Natural killer cell (primary cell): ENCODE measurements at regions of chr22 and their contacts with region 1.

Region 1: DNA sequence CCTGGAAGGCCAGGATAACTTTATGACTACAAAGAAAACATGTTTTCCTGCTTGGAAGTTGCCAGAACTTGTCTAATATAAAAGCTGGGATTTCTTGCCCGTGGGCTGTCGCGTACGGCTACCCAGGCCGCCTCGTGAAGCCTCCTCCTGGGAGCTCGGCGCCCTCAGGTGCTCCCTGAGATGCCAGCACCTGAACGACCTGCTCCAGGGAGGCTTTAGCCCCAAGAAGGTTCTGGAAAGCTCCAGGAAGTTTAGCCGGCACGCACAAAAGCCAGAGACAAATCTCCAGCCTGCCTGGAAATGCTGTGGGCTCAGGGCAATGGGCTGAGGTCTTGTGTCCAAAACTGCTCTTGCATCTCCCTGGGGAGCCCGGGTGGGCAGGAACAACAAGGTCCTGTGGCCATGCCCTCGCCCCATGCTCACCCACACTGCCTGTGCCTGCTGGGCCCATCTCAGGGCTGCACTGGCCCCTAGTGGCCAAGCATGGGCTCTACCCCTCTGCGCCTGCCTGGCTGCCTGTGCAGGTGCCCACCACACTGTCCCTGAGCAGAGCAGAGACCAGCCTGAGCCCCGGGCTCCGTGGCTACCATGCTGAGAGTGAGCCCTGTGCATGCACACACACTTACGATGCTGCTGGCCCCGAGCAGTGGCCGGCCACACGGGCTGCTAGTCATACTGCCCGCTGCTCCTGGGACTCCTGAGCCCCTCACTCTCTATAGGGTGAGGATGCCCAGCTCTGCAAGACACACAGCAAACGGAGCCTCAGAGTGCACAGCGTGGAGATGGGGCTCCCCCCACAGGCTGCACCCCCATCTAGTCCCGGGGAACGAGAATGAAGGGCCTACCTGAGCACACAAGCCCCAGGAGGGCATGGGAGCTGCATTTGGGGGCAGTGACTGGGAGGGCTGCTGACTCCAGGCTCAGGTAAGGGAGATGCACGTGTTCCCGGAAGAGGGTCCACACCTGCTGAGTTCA is 4.9 kb upstream of the CELSR1 start:
- DNase-seq: peak; percentile 74 to 85
- ATAC-seq: peak; percentile 94 to 100 (median 100)
- H3K4me3 ChIP-seq: no peak overlapping the region
- H3K4me3 Mint-ChIP-seq: no peak overlapping the region
- H3K27ac ChIP-seq: no peak overlapping the region
- H3K27ac Mint-ChIP-seq: no peak overlapping the region
- H3K4me1 ChIP-seq: peaks cover 22% of the 10 kb centered on the region
- H3K4me1 Mint-ChIP-seq: peaks cover 0 to 7% of the 10 kb centered on the region in 2 donors
- H3K27me3 ChIP-seq: peaks cover 18% of the 10 kb centered on the region
- H3K27me3 Mint-ChIP-seq: peaks cover 24 to 32% of the 10 kb centered on the region in 2 donors
- CTCF ChIP-seq: peak; percentile 92

Region 2: DNA sequence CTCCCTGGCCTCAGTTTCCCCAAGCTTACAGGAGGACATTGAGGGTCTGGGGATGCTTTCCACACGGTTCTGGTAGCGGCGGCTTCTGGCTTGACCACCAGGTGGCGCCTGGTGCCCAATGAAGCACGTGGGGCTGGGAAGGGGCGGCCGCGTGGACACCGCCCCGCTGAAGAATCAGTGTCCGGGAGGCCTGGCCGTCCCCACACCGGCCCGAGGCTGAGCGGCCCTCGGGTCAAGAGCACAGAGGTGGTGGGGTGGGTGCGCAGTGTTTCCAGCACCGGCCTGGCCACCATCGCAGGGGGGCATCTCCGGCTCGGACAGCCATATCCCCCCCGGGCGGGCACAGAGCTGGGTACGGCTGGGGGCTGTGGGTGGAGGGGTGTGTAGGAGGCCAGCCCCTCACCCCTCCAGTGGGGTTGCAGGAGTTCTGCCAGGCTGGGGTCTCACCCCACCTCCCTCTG is 419.8 kb before region 1 on chr22:
- intact Hi-C with region 1: loop called (anchors 5 kb)
- DNase-seq: peak; percentile 71 to 82
- ATAC-seq: peak in 2 of 3 donors; percentile 84 to 89
- H3K4me3 ChIP-seq: no peak overlapping the region
- H3K4me3 Mint-ChIP-seq: no peak overlapping the region
- H3K27ac ChIP-seq: no peak overlapping the region
- H3K27ac Mint-ChIP-seq: no peak overlapping the region
- H3K4me1 ChIP-seq: peaks cover 12% of the 10 kb centered on the region
- H3K4me1 Mint-ChIP-seq: no peaks in the 10 kb centered on the region
- H3K27me3 ChIP-seq: no peaks in the 10 kb centered on the region
- H3K27me3 Mint-ChIP-seq: no peaks in the 10 kb centered on the region
- CTCF ChIP-seq: peak; percentile 97

Region 3: DNA sequence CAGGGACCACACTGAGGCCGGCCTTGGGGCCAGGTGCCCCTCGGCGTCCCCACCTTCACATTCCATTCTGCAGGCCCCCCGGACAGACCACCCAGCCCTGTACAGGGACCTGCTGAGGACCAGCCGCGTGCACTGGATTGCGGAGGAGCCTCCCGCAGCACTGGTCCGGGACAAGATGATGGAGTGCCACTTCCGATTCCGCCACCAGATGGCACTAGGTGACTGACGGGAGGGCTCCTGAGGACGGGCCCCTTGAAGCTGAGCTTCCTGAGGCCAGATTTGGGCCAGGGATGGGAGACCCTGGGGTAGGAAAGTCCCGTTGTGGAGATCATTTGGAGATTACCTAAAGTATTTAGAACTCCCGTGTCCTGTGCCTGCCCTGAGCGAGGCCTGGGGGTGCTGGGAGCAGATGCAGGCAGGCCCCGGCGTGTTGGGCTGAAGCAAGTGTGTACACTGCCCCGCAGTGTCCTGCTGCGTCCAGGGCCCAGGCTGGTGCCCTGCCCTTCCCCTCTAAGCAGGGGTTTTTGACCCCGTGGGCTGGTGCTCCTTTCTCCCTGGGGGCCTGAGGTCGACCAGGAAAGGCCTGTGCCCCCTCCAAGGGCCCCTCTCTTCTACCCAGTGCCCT is 186.8 kb before region 1 on chr22:
- intact Hi-C with region 1: loop called (anchors 1 kb)
- DNase-seq: peak; percentile 70 to 80
- ATAC-seq: peak in 2 of 3 donors; percentile 82 to 84
- H3K4me3 ChIP-seq: no peak overlapping the region
- H3K4me3 Mint-ChIP-seq: no peak overlapping the region
- H3K27ac ChIP-seq: no peak overlapping the region
- H3K27ac Mint-ChIP-seq: no peak overlapping the region
- H3K4me1 ChIP-seq: peaks cover 9% of the 10 kb centered on the region
- H3K4me1 Mint-ChIP-seq: peaks cover 5 to 7% of the 10 kb centered on the region in 2 donors
- H3K27me3 ChIP-seq: no peaks in the 10 kb centered on the region
- H3K27me3 Mint-ChIP-seq: no peaks in the 10 kb centered on the region
- CTCF ChIP-seq: peak; percentile 74

Region 4: GRCh38 chr22:46367707-46368191 is 174.5 kb before region 1 on chr22:
- intact Hi-C with region 1: loop called (anchors 1 kb)
- DNase-seq: peak; percentile 76 to 89
- ATAC-seq: peak; percentile 45 to 58 (median 47)
- H3K4me3 ChIP-seq: no peak overlapping the region
- H3K4me3 Mint-ChIP-seq: peak overlapping the region; percentile 9
- H3K27ac ChIP-seq: no peak overlapping the region
- H3K27ac Mint-ChIP-seq: peak overlapping the region in 1 of 2 donors; percentile 51
- H3K4me1 ChIP-seq: peaks cover 71% of the 10 kb centered on the region
- H3K4me1 Mint-ChIP-seq: peaks cover 38 to 57% of the 10 kb centered on the region in 2 donors
- H3K27me3 ChIP-seq: no peaks in the 10 kb centered on the region
- H3K27me3 Mint-ChIP-seq: peaks cover 0 to 5% of the 10 kb centered on the region in 2 donors
- CTCF ChIP-seq: peak; percentile 91